ENCODE measurements at regions of chr2 and their contacts with region 1.

Region 1: GRCh38 chr2:43226558-43226954 is at the start of gene ZFP36L2:
- DNase-seq: peak; percentile 85
- ATAC-seq: peak; percentile 26
- H3K4me3 Mint-ChIP-seq: peak within 1 kb of the TSS; percentile 82
- H3K27ac Mint-ChIP-seq: peak within 1 kb of the TSS; percentile 60; the same call in 1 of the 2 replicates
- H3K4me1 Mint-ChIP-seq: peaks cover 58% of the 10 kb centered on the region
- H3K27me3 Mint-ChIP-seq: no peaks in the 10 kb centered on the region
- CTCF ChIP-seq: no peak
- total RNA-seq, gene ZFP36L2: 50.4 to 63.4 TPM (median 61.6 TPM) in 3 replicates

Region 2: GRCh38 chr2:42974721-42975717 is 251.5 kb before region 1 on chr2:
- CTCF ChIA-PET with region 1: interaction called, 17 read pairs
- POLR2A ChIA-PET with region 1: no interaction called
- DNase-seq: peak; percentile 89
- ATAC-seq: peak; percentile 91
- H3K4me3 Mint-ChIP-seq: peak overlapping the region; percentile 64
- H3K27ac Mint-ChIP-seq: no peak overlapping the region
- H3K4me1 Mint-ChIP-seq: peaks cover 11% of the 10 kb centered on the region
- H3K27me3 Mint-ChIP-seq: no peaks in the 10 kb centered on the region; the same call in 1 of the 2 replicates
- CTCF ChIP-seq: peak; percentile 60

Region 3: DNA sequence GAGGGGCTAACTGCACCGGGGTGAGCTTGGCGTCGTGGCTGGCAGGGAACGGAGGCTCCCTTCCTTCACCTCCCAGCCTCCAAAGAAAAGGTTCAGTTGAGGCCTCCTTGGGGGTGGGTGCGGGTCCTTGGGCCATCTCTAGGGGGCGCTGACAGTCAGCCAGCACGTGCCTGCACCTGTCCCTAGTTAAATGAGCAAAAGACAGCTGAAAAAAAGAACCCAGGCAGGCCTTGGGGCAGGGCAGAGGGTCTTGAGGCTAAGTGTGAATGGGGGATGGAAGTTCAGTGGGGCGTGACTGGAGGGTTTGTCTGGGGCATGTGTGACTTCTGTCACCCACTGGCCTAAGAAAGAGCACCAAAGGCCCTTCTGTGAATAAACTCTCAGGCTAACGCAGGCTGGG is 56.6 kb before region 1 on chr2:
- CTCF ChIA-PET with region 1: interaction called, 20 read pairs
- POLR2A ChIA-PET with region 1: interaction called, 5 read pairs
- DNase-seq: peak; percentile 77
- ATAC-seq: peak; percentile 43
- H3K4me3 Mint-ChIP-seq: no peak overlapping the region
- H3K27ac Mint-ChIP-seq: no peak overlapping the region
- H3K4me1 Mint-ChIP-seq: peaks cover 33% of the 10 kb centered on the region
- H3K27me3 Mint-ChIP-seq: peaks cover 6% of the 10 kb centered on the region
- CTCF ChIP-seq: peak; percentile 92

Region 4: GRCh38 chr2:43186679-43187374 is 39.7 kb before region 1 on chr2:
- CTCF ChIA-PET with region 1: interaction called, 15 read pairs
- POLR2A ChIA-PET with region 1: no interaction called
- DNase-seq: peak; percentile 45
- ATAC-seq: peak; percentile 75
- H3K4me3 Mint-ChIP-seq: no peak overlapping the region
- H3K27ac Mint-ChIP-seq: peak overlapping the region; percentile 51
- H3K4me1 Mint-ChIP-seq: peaks cover 55% of the 10 kb centered on the region
- H3K27me3 Mint-ChIP-seq: no peaks in the 10 kb centered on the region
- CTCF ChIP-seq: no peak

Region 5: DNA sequence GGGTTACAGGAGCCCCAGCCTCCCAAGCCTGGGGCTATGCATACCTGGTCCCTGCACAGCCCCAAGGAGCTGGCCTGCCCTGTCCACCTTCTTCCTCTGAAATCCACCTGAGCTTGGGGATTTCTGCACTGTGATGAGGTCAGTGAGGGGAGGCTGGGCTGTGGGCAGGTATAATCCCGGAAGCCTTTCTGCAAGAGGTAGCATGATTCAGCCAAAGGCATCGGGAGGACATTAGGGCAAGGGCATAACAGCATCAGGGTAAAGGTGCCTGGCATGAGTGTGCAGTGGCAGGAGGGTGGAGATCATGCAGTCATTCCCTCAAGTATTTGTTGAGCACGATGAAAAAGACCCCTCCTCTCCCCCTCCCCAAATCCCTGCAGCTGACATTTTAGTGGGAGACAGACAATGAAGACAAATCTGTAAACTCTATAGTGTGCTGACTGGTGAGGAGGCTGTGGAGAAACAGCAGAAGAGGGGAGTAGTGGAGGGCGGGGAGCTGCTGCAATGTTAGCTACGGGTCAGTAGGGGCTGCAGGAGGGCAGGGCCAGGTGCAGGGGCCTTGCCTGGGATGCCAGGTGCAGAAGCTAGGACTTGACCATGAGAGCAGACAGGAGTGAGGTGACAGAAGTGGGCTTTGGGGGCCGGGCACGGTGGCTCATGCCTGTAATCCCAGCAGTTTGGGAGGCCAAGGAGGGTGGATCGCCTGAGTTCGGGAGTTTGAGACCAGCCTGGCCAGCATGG is 18.8 kb before region 1 on chr2:
- CTCF ChIA-PET with region 1: interaction called, 19 read pairs
- POLR2A ChIA-PET with region 1: no interaction called
- DNase-seq: peak; percentile 59
- ATAC-seq: peak; percentile 94
- H3K4me3 Mint-ChIP-seq: no peak overlapping the region
- H3K27ac Mint-ChIP-seq: peak overlapping the region; percentile 9; the same call in 1 of the 2 replicates
- H3K4me1 Mint-ChIP-seq: peaks cover 19% of the 10 kb centered on the region
- H3K27me3 Mint-ChIP-seq: no peaks in the 10 kb centered on the region
- CTCF ChIP-seq: no peak

Region 6: DNA sequence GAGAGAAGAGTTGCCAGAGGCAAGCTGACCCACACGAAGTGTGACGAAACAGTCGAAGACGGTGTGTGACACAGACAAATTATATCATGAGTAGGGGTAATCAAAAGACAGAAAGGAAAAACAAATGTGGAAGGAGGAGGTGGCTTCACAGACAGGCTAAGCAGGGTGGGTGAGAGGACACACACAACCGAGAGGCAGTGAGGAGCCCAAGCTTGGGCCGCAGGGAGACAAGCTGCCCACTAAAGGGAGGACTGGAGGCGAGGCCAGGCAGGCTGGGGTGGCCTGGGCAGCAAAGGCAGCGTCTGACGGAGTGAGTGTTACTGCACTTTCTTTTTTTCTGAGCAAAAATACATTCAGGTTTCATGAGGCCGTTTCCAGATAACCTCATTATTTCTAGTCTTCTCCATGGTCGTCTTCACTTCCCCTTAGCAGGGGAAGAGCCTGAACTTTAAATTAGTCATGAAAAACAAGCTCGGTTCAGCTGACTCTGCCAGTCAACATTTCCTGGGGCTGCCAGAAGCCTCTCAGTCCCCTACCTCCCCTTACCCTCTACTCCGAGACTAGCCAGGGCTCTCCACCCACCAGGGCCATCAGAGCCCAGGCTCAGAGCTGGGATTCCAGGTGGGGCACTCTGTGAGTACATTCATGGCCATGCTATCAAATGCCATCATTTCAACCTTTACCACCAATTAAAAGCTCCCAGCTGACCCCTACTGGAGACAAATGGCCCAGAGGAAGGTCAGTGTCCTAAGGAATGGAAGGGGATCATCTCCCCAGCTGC is 13.6 kb after region 1 on chr2:
- CTCF ChIA-PET with region 1: interaction called, 23 read pairs
- POLR2A ChIA-PET with region 1: interaction called, 5 read pairs
- DNase-seq: no peak
- ATAC-seq: peak; percentile 39
- H3K4me3 Mint-ChIP-seq: no peak overlapping the region
- H3K27ac Mint-ChIP-seq: peak overlapping the region; percentile 48
- H3K4me1 Mint-ChIP-seq: peaks cover 7% of the 10 kb centered on the region
- H3K27me3 Mint-ChIP-seq: no peaks in the 10 kb centered on the region
- CTCF ChIP-seq: no peak

Region 7: DNA sequence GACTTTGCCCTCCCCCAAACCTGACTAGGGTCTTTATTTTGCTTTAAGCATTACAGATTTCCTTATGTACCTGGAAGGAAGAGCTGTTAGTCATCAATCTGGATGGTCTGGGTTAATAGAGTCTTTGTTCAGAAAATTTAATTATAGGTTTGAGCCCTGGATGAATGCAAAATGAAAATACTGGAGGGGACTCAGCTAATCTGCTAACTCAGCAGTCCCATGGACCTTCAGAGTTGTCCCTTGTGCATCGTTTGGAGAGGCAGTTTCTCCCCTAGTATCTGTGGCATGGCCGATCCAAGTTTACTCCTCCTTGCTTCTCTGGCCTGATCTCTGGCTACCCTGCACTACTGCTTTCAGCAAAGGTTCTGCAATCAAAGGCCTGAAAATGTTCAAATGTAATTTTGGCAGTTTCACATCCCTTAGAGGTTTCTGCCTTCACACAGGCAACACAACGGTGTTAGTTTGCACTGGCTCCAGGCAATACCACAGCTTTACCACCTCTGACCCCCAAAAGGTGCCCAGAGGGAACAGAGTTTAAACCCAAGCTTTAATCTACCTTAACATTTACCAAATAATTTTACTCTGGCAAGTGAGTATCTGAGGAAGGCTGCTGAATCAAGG is 235.0 kb after region 1 on chr2:
- CTCF ChIA-PET with region 1: no interaction called
- POLR2A ChIA-PET with region 1: no interaction called
- DNase-seq: no peak
- ATAC-seq: no peak
- H3K4me3 Mint-ChIP-seq: no peak overlapping the region
- H3K27ac Mint-ChIP-seq: peak overlapping the region; percentile 13; the same call in 1 of the 2 replicates
- H3K4me1 Mint-ChIP-seq: peaks cover 15% of the 10 kb centered on the region
- H3K27me3 Mint-ChIP-seq: no peaks in the 10 kb centered on the region
- CTCF ChIP-seq: no peak